ENCODE measurements at regions of chr12 and their contacts with region 1.

Region 1: DNA sequence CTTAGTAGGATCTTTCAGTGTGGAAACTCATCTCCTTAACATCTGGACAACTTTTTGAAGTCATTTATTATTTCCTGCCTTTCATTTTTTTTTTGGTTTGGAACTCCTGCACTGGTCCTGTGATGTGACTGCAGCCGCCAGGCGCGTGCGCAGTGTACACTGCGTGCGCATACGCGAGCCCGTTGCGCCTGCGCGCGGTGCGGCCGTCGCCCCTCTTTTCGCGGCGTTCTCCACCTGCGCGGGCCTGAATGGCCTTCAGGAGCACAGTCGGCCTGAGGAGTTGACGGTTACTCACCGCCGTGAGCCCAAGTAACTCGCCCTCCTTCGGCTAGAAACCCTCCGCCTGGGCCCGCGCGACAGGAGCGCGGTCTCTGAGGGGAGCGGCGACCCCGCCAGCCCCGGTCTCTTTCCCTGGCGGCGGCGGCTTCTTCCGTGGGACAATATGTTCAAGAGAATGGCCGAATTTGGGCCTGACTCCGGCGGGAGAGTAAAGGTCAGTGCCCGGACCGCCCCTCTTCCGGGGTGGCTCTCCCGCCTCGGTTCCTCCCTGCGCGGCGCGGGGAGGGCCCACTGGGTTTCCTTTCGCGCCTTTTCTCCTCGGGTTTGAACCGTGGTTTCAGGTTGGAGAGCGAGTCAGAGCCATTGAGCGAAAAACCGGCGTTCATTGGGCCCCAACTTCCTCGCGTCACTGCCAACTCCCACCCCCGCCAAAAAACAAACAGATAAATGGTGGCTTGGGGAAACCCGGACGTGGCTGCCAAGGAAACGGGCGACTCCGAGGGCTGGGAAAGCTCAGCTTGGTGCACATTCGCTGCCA is at the start of gene YEATS4:
- DNase-seq: peak; percentile 59 to 93 (median 83)
- ATAC-seq: peak; percentile 85 to 90 (median 90)
- H3K4me3 ChIP-seq: peak within 1 kb of the TSS; percentile 64 to 97
- H3K4me3 Mint-ChIP-seq: peak within 1 kb of the TSS; percentile 82 to 89 (median 88)
- H3K27ac ChIP-seq: peak within 1 kb of the TSS; percentile 99
- H3K27ac Mint-ChIP-seq: peak within 1 kb of the TSS; percentile 82 to 87
- H3K4me1 ChIP-seq: peaks cover 8 to 25% of the 10 kb centered on the region in 2 experiments
- H3K4me1 Mint-ChIP-seq: peaks cover 26 to 38% (median 27%) of the 10 kb centered on the region in 3 donors
- H3K27me3 ChIP-seq: no peaks in the 10 kb centered on the region
- H3K27me3 Mint-ChIP-seq: peaks cover under 1% of the 10 kb centered on the region in 2 donors
- total RNA-seq, gene YEATS4: 16.3 to 29.6 (median 21.5) TPM

Region 2: DNA sequence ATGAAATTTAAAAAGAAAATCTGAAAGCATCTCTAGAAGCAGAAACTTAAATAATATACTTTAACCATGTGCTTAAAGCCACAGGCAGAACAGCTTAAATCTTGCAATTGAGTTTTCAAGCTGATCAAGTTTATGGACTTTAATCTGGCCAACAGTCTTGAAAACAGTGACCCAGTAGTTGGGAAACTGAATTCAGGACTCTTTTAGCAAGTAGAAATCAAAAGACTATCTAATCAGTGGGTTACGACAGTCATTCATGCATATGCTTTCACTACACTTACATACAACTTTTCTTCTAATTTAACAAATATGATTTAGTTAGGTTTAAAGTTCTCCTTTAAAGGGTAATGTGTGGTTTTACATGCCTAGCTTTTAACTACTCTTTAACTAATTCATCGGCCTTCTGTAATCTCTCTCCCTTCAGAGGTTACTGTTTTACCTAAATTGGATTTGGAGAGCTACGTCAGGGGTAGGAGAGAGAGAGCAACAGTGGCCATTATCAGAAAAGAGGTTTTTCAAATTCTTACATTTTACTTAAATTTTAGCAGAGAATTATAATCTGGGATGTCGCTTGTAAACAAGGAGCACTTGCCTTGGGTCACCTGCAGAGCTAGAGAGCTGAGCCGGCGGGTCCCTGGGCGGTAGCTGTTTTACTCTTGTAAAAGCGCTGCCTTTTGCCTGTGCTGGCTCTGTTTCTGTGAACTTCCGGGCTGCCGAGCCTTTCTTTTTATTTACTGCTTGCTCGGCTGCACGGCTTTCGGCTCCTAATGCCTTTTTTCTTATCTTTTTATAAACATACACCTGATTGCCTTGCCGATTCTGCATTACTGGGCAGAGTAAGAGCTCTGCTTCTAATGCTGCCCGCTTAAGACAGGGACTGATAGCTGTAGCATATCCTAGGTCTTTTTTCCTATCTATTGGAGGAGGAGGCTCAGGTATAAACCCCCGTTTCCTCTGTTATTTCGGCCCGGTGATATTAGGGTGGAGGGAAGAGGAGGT is 29.0 kb before region 1 on chr12:
- CTCF ChIA-PET with region 1: interaction called, 5 to 31 read pairs
- POLR2A ChIA-PET with region 1: interaction called, 11 to 16 read pairs
- DNase-seq: peak; percentile 51 to 78 (median 66)
- ATAC-seq: peak; percentile 71 to 81 (median 76)
- H3K4me3 ChIP-seq: peak overlapping the region; percentile 53 to 72
- H3K4me3 Mint-ChIP-seq: peak overlapping the region; percentile 83 to 91 (median 91)
- H3K27ac ChIP-seq: peak overlapping the region; percentile 91
- H3K27ac Mint-ChIP-seq: peak overlapping the region; percentile 96 to 100
- H3K4me1 ChIP-seq: peaks cover 20 to 22% of the 10 kb centered on the region in 2 experiments
- H3K4me1 Mint-ChIP-seq: peaks cover 58 to 65% (median 63%) of the 10 kb centered on the region in 3 donors
- H3K27me3 ChIP-seq: no peaks in the 10 kb centered on the region
- H3K27me3 Mint-ChIP-seq: no peaks in the 10 kb centered on the region

Region 3: DNA sequence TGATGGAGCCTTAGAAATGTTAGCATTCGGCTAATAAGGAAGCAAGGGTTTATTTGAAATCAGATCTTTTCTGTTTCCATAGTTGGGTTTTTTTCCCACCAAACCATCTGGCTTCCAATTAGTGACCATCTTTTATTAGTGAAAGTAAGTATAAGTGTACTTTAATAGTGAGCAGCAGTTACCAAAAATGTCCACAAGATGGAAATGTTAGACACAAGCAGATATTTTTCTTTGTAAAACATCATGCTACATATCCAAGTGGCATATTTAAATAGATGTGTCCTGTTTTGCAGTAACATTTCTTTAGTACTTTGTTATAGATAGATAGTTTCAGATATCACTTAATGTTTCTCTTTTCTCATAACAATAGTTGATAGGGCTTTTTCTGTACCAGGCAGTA is 28.6 kb after region 1 on chr12:
- CTCF ChIA-PET with region 1: interaction called, 3 to 12 read pairs
- POLR2A ChIA-PET with region 1: no interaction called
- DNase-seq: peak in 1 of 35 experiments; percentile 31
- ATAC-seq: no peak
- H3K4me3 ChIP-seq: no peak overlapping the region
- H3K4me3 Mint-ChIP-seq: no peak overlapping the region
- H3K27ac ChIP-seq: no peak overlapping the region
- H3K27ac Mint-ChIP-seq: no peak overlapping the region
- H3K4me1 ChIP-seq: no peaks in the 10 kb centered on the region
- H3K4me1 Mint-ChIP-seq: peaks cover 0 to 5% (median 0%) of the 10 kb centered on the region in 3 donors
- H3K27me3 ChIP-seq: no peaks in the 10 kb centered on the region
- H3K27me3 Mint-ChIP-seq: no peaks in the 10 kb centered on the region

Region 4: GRCh38 chr12:69585189-69586062 is 225.7 kb after region 1 on chr12 and contains the start of gene CCT2:
- CTCF ChIA-PET with region 1: no interaction called
- POLR2A ChIA-PET with region 1: interaction called, 3 to 20 read pairs
- DNase-seq: peak; percentile 89 to 98 (median 96)
- ATAC-seq: peak; percentile 93 to 95 (median 95)
- H3K4me3 ChIP-seq: peak within 1 kb of the TSS; percentile 99 to 100
- H3K4me3 Mint-ChIP-seq: peak within 1 kb of the TSS; percentile 93 to 100 (median 95)
- H3K27ac ChIP-seq: peak within 1 kb of the TSS; percentile 94
- H3K27ac Mint-ChIP-seq: peak within 1 kb of the TSS; percentile 88 to 94
- H3K4me1 ChIP-seq: peaks cover 7 to 10% of the 10 kb centered on the region in 2 experiments
- H3K4me1 Mint-ChIP-seq: peaks cover 8 to 21% (median 12%) of the 10 kb centered on the region in 3 donors
- H3K27me3 ChIP-seq: no peaks in the 10 kb centered on the region
- H3K27me3 Mint-ChIP-seq: no peaks in the 10 kb centered on the region
- total RNA-seq, gene CCT2: 108 to 183 (median 111) TPM

Region 5: GRCh38 chr12:70106347-70106746 is 746.6 kb after region 1 on chr12:
- CTCF ChIA-PET with region 1: interaction called in 1 of 2 experiments, 10 read pairs
- POLR2A ChIA-PET with region 1: no interaction called
- DNase-seq: no peak
- ATAC-seq: no peak
- H3K4me3 ChIP-seq: no peak overlapping the region
- H3K4me3 Mint-ChIP-seq: no peak overlapping the region
- H3K27ac ChIP-seq: no peak overlapping the region
- H3K27ac Mint-ChIP-seq: no peak overlapping the region
- H3K4me1 ChIP-seq: no peaks in the 10 kb centered on the region
- H3K4me1 Mint-ChIP-seq: no peaks in the 10 kb centered on the region
- H3K27me3 ChIP-seq: peaks cover 0 to 7% of the 10 kb centered on the region in 2 experiments
- H3K27me3 Mint-ChIP-seq: peaks cover 1 to 2% of the 10 kb centered on the region in 2 donors